ENCODE measurements at regions of chr4 and their contacts with region 1.

Region 1: GRCh38 chr4:158492391-158492790 is 29.3 kb upstream of the RXFP1 start:
- DNase-seq: no peak
- ATAC-seq: no peak

Region 2: DNA sequence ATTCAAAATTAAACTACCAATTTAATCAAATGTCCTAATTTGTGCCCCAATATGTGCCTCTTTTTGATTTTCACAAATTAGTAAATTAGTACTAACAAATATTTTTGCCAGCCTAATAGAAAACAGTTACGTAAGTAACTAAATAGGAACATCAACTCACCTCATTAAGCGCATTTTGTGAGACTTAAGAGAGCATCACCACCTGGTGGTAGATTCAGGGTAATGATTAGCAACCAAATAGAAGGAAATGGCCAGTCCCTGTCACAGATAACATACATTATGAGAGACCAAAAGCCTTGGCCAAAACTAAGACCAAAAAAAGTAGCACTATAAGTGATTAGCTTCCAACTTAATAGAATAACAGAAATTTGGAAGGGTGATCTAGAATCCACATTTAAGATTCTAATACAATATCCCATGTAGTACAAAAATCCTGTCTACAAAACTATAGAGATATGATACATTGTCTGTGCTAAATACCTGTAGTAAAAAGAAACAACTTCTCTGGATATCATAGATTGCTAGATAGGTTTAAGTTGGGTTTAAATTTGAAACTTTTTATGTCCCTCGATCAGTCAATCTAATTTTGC is 132.6 kb after region 1 on chr4:
- intact Hi-C with region 1: loop called (anchors 5 kb)
- DNase-seq: no peak
- ATAC-seq: peak; percentile 59

Region 3: DNA sequence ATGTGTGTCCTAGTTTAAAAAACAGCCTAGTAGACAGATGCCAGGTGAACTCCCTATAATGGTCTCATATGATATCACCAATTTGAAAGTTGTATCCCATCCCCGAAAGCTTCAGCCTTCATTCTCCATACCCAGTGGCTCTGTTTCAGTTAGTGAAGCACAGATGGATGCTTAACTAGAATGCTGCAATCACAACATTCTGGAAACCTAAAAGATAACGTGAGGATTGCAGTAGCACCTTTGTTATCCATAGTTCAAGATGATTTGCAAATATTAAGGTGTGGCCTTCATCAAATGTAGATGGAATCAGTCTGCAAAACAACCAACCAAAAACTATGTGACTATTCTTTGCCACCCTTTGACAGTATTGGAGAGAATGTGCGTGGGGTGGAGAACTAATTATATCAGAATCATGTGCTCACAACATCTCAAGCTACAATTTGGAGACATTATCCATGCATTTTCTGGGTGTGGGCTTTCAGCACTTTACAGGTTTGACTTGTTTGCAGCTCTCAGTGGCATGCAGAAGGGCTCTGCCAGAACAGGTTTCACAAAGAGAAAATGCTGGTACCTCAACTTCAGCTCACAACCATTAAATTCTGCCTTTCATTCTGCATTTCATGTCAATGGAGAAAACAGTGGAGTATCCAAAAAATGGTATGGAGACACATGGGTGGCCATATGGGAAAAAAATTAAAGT is 249.1 kb after region 1 on chr4:
- intact Hi-C with region 1: no loop called
- DNase-seq: no peak
- ATAC-seq: no peak

Measured in Right ventricle myocardium inferior (tissue), 1 donor.